Naive thymus-derived CD4-positive, alpha-beta T cell (primary cell): ENCODE measurements at regions of chr15 and their contacts with region 1.

Region 1: DNA sequence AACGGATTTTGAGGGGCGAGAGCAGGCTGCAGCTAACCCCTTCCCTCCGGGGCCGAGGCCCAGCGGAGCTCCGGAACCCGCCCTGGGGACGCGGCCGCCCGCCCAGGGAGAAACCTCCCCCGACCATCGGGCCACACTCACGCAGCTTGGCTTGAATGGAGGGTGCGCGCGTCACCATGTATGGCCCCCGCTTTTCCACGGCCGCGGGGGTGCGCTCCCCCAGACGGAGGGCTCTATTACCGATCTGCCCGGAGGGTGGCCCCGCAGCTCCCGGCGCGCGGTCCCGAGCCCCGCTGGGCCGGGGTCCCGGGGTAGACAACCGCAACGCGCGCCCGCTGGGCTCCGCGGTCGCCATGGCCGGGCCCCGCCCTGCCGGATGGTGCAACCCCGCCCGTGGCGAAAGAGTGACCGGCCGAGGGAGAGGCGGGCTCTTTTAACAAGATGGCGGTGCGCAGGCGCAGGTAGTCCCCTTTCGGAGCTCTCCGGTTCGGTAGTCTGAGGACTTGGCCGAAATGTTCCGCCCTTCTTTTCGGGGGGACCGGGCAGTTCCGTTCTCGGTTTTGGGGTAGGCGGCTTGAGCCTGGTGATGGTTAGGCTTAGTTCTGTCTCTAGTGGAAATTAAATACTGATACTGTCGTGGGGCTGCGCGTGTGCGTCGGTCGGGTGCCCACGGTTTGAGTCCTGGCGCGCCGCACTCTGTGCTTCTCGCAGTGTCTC is at the start of gene FAM219B:
- DNase-seq: peak; percentile 44 to 86 (median 61)
- ATAC-seq: peak; percentile 93
- H3K4me3 ChIP-seq: peak within 1 kb of the TSS; percentile 72
- H3K4me3 Mint-ChIP-seq: peak within 1 kb of the TSS; percentile 93 to 99 (median 98)
- H3K27ac ChIP-seq: peak within 1 kb of the TSS; percentile 85
- H3K27ac Mint-ChIP-seq: peak within 1 kb of the TSS; percentile 90 to 98 (median 95)
- H3K4me1 ChIP-seq: peaks cover 17 to 20% of the 10 kb centered on the region in 2 donors
- H3K4me1 Mint-ChIP-seq: peaks cover 28 to 54% (median 42%) of the 10 kb centered on the region in 7 donors
- H3K27me3 ChIP-seq: no peaks in the 10 kb centered on the region
- H3K27me3 Mint-ChIP-seq: no peaks in the 10 kb centered on the region
- total RNA-seq, gene FAM219B: 40.5 to 111 (median 99.6) TPM

Region 2: DNA sequence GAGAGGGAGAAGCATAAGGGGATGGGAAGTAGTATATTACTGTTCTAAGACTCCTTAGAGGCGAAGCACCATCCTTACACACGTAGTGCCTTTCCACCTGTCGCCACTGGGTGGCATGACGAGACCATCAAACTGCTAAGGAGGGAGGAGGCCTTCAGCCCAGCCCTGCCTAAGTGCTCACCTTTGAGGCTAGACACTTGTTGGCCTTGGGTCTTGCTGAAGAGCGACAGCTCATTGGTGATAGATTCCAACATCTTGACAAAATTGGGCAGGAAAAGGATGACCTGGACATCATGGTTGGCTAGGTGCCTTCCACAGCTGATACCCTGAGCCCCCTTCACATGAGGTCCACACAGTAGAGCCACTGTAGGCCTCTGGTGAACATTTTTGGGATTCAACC is 271.4 kb before region 1 on chr15:
- CTCF ChIA-PET with region 1: interaction called, 4 read pairs
- POLR2A ChIA-PET with region 1: no interaction called
- intact Hi-C with region 1: loop called in 1 of 2 experiments (anchors 1 kb)
- DNase-seq: peak; percentile 41 to 74 (median 65)
- ATAC-seq: peak; percentile 88
- H3K4me3 ChIP-seq: no peak overlapping the region
- H3K4me3 Mint-ChIP-seq: no peak overlapping the region
- H3K27ac ChIP-seq: no peak overlapping the region
- H3K27ac Mint-ChIP-seq: peak overlapping the region in 2 of 9 donors; percentile 25 to 74
- H3K4me1 ChIP-seq: no peaks in the 10 kb centered on the region
- H3K4me1 Mint-ChIP-seq: peaks cover 0 to 7% (median 0%) of the 10 kb centered on the region in 7 donors
- H3K27me3 ChIP-seq: no peaks in the 10 kb centered on the region
- H3K27me3 Mint-ChIP-seq: no peaks in the 10 kb centered on the region

Region 3: GRCh38 chr15:74835307-74835823 is 71.2 kb before region 1 on chr15:
- CTCF ChIA-PET with region 1: interaction called, 14 read pairs
- POLR2A ChIA-PET with region 1: no interaction called
- intact Hi-C with region 1: no loop called
- DNase-seq: peak in 5 of 9 donors; percentile 14 to 64 (median 21)
- ATAC-seq: peak; percentile 72
- H3K4me3 ChIP-seq: no peak overlapping the region
- H3K4me3 Mint-ChIP-seq: no peak overlapping the region
- H3K27ac ChIP-seq: no peak overlapping the region
- H3K27ac Mint-ChIP-seq: peak overlapping the region in 3 of 9 donors; percentile 5 to 48 (median 28)
- H3K4me1 ChIP-seq: no peaks in the 10 kb centered on the region
- H3K4me1 Mint-ChIP-seq: peaks cover 0 to 8% (median 4%) of the 10 kb centered on the region in 7 donors
- H3K27me3 ChIP-seq: no peaks in the 10 kb centered on the region
- H3K27me3 Mint-ChIP-seq: no peaks in the 10 kb centered on the region

Region 4: GRCh38 chr15:74873036-74873755 is 33.4 kb before region 1 on chr15 and contains the start of gene SCAMP2:
- CTCF ChIA-PET with region 1: interaction called, 30 read pairs
- POLR2A ChIA-PET with region 1: interaction called, 45 read pairs
- intact Hi-C with region 1: loop called (anchors 1 kb)
- DNase-seq: peak; percentile 83 to 94 (median 91)
- ATAC-seq: peak; percentile 95
- H3K4me3 ChIP-seq: peak within 1 kb of the TSS; percentile 86
- H3K4me3 Mint-ChIP-seq: peak within 1 kb of the TSS; percentile 92 to 100 (median 98)
- H3K27ac ChIP-seq: peak within 1 kb of the TSS; percentile 98
- H3K27ac Mint-ChIP-seq: peak within 1 kb of the TSS; percentile 88 to 99 (median 96)
- H3K4me1 ChIP-seq: peaks cover 38 to 39% of the 10 kb centered on the region in 2 donors
- H3K4me1 Mint-ChIP-seq: peaks cover 31 to 54% (median 45%) of the 10 kb centered on the region in 7 donors
- H3K27me3 ChIP-seq: no peaks in the 10 kb centered on the region
- H3K27me3 Mint-ChIP-seq: peaks cover 0 to 8% (median 0%) of the 10 kb centered on the region in 5 donors
- total RNA-seq, gene SCAMP2: 78.9 to 130 (median 116) TPM

Region 5: GRCh38 chr15:74937596-74938296 is 31.1 kb after region 1 on chr15 and contains the start of gene COX5A:
- CTCF ChIA-PET with region 1: interaction called, 3 read pairs
- POLR2A ChIA-PET with region 1: interaction called, 9 read pairs
- intact Hi-C with region 1: loop called (anchors 1 kb)
- DNase-seq: peak; percentile 86 to 94 (median 92)
- ATAC-seq: peak; percentile 99
- H3K4me3 ChIP-seq: peak within 1 kb of the TSS; percentile 62
- H3K4me3 Mint-ChIP-seq: peak within 1 kb of the TSS; percentile 87 to 97 (median 94)
- H3K27ac ChIP-seq: peak within 1 kb of the TSS; percentile 85
- H3K27ac Mint-ChIP-seq: peak within 1 kb of the TSS; percentile 85 to 95 (median 91)
- H3K4me1 ChIP-seq: peaks cover 0 to 17% of the 10 kb centered on the region in 2 donors
- H3K4me1 Mint-ChIP-seq: peaks cover 16 to 38% (median 26%) of the 10 kb centered on the region in 7 donors
- H3K27me3 ChIP-seq: no peaks in the 10 kb centered on the region
- H3K27me3 Mint-ChIP-seq: peaks cover 0 to 3% (median 0%) of the 10 kb centered on the region in 5 donors
- total RNA-seq, gene COX5A: 44.4 to 210 (median 59.2) TPM

Region 6: GRCh38 chr15:74956648-74957300 is 50.2 kb after region 1 on chr15 and contains the start of gene RPP25:
- CTCF ChIA-PET with region 1: interaction called, 7 read pairs
- POLR2A ChIA-PET with region 1: no interaction called
- intact Hi-C with region 1: loop called (anchors 1 to 2 kb)
- DNase-seq: peak; percentile 32 to 82 (median 49)
- ATAC-seq: peak; percentile 92
- H3K4me3 ChIP-seq: peak within 1 kb of the TSS; percentile 67
- H3K4me3 Mint-ChIP-seq: peak within 1 kb of the TSS; percentile 68 to 83 (median 81)
- H3K27ac ChIP-seq: peak within 1 kb of the TSS; percentile 1
- H3K27ac Mint-ChIP-seq: no peak within 1 kb of the TSS
- H3K4me1 ChIP-seq: peaks cover 17 to 23% of the 10 kb centered on the region in 2 donors
- H3K4me1 Mint-ChIP-seq: peaks cover 14 to 40% (median 31%) of the 10 kb centered on the region in 7 donors
- H3K27me3 ChIP-seq: peaks cover 9 to 10% of the 10 kb centered on the region in 2 donors
- H3K27me3 Mint-ChIP-seq: peaks cover 25 to 47% (median 27%) of the 10 kb centered on the region in 5 donors
- total RNA-seq, gene RPP25: 0.95 to 5.8 (median 3.3) TPM